ENCODE measurements at regions of chr13 and their contacts with region 1.

Region 1: GRCh38 chr13:29923554-29924481 is 73.4 kb upstream of the UBL3 start:
- DNase-seq: peak; percentile 93
- H3K4me3 ChIP-seq: no peak overlapping the region
- H3K27ac ChIP-seq: peak overlapping the region; percentile 65
- H3K4me1 ChIP-seq: peaks cover 14% of the 10 kb centered on the region
- H3K27me3 ChIP-seq: no peaks in the 10 kb centered on the region
- CTCF ChIP-seq: peak; percentile 90

Region 2: GRCh38 chr13:29782798-29783197 is 141.0 kb before region 1 on chr13:
- intact Hi-C with region 1: loop called (anchors 10 kb)
- DNase-seq: no peak
- H3K4me3 ChIP-seq: no peak overlapping the region
- H3K27ac ChIP-seq: no peak overlapping the region
- H3K4me1 ChIP-seq: peaks cover under 1% of the 10 kb centered on the region
- H3K27me3 ChIP-seq: no peaks in the 10 kb centered on the region
- CTCF ChIP-seq: no peak

Region 3: GRCh38 chr13:29835280-29836061 is 88.3 kb before region 1 on chr13:
- intact Hi-C with region 1: no loop called
- DNase-seq: no peak
- H3K4me3 ChIP-seq: no peak overlapping the region
- H3K27ac ChIP-seq: no peak overlapping the region
- H3K4me1 ChIP-seq: no peaks in the 10 kb centered on the region
- H3K27me3 ChIP-seq: no peaks in the 10 kb centered on the region
- CTCF ChIP-seq: no peak